Ascending aorta (tissue), 2 donors: ENCODE measurements at regions of chr6 and their contacts with region 1.

Region 1: DNA sequence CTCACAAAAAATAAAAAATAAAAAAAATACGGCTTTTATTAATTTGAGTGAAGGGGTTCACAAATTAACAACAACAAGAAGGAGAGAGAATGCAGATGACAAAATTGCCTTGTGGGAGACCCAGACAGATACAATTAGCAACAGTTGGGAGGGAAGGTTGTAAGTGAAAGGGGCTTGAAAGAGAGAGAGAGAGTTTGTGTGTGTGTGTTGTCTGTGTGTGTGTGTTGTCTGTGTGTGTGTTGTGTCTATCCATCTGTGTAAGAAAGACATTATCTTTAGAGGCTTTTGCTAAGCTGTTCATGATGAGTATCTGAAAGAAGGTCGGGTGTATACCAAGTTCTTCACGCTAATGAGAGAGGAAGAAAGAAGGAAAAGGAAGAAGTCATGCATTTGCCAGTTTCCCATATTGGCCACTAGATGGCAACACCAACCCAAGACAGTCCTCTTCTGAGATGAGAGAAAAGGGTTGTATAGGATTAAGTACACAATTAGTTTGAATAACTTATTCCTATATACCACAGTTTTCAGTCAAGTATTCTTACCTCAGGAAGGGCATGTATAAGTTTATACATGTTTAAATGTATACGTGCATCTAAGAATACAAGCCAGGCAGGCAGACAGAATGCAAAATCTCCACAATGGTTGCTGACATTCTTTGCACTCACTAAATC is 63.7 kb upstream of the CD2AP start:
- DNase-seq: no peak
- H3K4me3 ChIP-seq: peak overlapping the region; percentile 51 to 67
- H3K27ac ChIP-seq: peak overlapping the region; percentile 25 to 37
- H3K4me1 ChIP-seq: peaks cover 0 to 2% of the 10 kb centered on the region in 2 donors
- H3K27me3 ChIP-seq: no peaks in the 10 kb centered on the region
- CTCF ChIP-seq: peak; percentile 71 to 88 (median 86)

Region 2: DNA sequence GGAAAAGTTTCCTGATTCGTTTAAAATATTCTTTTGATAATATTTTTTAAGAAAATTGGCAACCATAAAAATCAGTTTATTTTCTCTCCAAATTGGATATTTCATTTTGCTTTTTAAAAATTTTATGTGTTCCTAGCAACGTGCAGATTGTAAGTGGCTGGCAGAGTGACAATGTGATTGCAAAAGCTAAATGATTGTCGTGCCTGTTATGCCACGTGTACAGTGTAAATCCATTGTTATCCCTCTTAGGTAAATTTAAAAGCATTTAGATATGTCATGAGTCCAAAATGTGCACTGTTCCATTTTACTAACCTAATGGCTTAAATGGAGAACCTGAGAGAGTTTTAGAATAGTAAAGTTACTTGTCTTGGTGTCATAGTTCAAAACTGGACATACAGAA is 190.1 kb after region 1 on chr6:
- intact Hi-C with region 1: loop called (anchors 10 kb)
- DNase-seq: no peak
- H3K4me3 ChIP-seq: no peak overlapping the region
- H3K27ac ChIP-seq: no peak overlapping the region
- H3K4me1 ChIP-seq: peaks cover 0 to 5% of the 10 kb centered on the region in 2 donors
- H3K27me3 ChIP-seq: no peaks in the 10 kb centered on the region
- CTCF ChIP-seq: no peak

Region 3: DNA sequence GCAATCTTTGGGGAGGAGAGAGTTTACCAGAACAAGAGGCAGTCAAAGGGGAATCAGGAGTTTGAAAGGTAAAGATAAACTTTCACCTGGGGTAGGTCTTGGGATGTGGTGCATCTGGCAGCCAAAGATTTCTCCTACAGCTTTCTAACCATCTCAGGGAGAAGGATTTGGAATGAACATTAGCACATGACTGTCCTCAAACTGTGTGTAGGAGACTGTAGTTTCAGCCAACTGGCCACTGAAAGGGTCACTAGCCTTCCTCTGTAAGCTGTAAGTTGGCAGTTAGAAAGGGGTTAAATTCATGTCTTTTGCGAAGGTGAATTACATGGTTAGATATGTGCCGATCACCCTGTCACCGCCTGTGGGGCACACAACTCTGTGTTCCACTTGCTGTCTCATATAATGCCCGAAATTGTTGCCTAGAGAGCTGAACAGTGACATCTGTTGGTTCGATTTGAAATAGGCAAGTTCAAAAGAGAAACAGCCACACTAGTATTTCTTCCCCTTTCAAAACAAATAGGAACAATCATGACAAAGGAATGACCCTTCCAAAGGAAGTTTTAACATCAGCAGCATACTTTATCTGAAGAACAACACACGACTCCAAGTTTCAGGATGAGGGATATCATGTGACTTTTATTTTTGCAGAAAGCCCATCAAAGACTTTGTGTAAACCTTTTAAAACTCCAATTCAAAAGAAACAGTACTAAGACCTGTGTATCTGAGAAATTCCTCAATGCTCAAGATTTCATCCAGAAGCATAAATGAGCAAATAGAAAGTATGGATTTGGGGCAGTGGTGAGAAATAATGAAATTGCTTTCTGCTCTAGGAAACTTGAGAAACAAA is 366.8 kb after region 1 on chr6:
- intact Hi-C with region 1: loop called (anchors 2 kb)
- DNase-seq: no peak
- H3K4me3 ChIP-seq: no peak overlapping the region
- H3K27ac ChIP-seq: no peak overlapping the region
- H3K4me1 ChIP-seq: no peaks in the 10 kb centered on the region
- H3K27me3 ChIP-seq: no peaks in the 10 kb centered on the region
- CTCF ChIP-seq: peak; percentile 12 to 60 (median 44)